Left ventricle myocardium inferior (tissue), 1 donor: ENCODE measurements at regions of chr17 and their contacts with region 1.

Region 1: DNA sequence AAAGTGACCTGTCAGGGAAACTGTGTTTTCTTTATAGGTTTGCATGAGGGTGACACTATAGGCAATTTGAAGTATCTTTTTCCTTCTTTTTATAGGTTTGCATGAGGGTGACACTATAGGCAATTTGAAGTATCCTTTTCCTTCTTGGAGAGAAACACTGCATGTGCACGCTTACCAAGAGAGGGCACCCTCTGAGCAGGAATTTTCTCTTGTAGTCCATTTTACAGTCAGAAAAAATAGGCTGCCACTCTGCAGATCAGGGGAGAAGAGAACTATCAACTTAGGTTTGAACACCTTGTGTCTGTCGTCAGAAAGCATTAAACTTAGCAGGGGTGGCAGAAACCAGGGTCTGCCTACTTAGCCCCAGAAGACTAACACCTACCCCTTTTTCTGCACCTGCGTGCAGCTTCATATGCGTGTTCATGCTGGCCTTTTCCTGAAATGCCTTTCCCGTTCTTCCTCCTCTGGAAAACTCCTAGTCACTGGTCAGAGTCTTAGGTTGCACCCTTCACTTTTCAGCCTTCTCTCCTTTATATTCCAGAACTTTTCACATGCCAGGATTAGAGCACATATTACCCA is 16.4 kb upstream of the SMIM36 start:
- DNase-seq: no peak
- H3K4me3 ChIP-seq: no peak overlapping the region
- H3K27ac ChIP-seq: no peak overlapping the region
- H3K4me1 ChIP-seq: no peaks in the 10 kb centered on the region
- H3K27me3 ChIP-seq: peaks cover 5% of the 10 kb centered on the region
- CTCF ChIP-seq: peak; percentile 67

Region 2: DNA sequence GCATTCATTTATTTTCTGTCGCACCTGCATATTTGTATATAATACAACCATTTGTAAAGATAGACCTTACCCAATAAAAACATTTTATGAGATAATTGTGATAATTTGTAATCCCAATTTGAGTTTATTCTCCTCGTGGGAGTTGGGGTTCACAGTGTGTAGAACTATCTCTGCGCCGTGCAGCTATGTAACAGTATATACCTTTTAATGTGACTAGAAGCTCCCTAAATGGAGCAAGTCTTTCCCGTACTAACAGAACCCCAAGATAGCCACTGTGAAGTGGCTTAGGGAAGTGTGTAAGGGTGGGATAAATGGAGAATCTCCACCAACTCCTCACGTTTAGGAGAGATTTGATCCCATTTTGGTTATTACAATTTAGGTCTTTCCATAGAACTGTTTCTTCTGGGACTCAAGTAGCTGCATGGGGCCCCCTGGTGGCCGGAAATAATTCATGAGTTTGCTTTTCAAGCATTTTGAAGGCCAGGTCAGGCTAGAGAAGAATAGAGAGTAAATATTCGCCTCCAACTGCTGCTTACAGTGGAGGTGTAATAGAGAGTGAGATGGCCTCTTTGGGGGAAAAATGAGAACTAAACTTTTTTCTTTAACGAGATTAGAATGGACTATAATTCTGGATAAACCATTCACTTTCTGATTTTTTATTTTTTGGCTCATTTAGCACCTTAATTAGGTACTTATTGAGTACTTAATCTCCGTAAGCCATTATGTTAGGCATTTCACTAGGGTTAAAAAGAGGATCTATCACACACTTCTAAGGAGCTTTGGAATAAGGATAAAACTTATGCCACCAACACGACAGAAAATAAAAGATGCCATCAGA is 190.5 kb after region 1 on chr17:
- intact Hi-C with region 1: loop called (anchors 2 kb)
- DNase-seq: peak; percentile 75
- H3K4me3 ChIP-seq: no peak overlapping the region
- H3K27ac ChIP-seq: no peak overlapping the region
- H3K4me1 ChIP-seq: peaks cover 26% of the 10 kb centered on the region
- H3K27me3 ChIP-seq: no peaks in the 10 kb centered on the region
- CTCF ChIP-seq: peak; percentile 84

Region 3: DNA sequence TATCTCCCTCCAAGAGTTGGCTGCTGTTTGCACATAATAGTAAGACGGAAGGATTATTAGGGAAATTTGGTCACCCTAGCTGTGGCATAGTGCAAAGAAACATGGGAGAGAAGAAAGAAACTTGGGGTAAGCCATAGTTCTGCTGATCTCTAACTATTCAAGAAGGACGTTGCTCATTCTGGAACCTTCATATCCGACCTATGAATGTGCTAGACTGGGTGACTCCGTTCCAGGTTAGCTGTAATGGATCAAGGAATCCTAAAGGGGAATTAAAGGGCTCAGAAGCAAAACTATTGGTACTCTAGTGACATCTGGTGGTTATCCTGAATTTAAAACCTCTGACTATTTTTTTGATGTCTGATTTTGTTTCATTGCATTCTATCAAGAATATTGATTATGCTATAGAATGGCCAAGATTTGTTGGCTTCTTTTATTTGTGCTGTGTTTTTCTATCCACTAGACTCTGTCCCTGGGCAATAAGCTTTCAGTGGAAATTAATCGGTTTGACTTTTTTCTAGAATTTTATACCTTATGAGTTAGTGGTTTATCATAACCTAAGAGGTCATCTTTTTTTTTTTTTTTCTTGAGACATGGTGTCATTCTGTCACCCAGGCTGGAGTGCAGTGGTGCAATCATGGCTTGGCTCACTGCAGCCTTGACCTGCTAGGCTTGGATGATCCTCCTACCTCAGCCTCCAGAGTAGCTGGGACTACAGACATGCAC is 242.7 kb after region 1 on chr17:
- intact Hi-C with region 1: loop called (anchors 2 kb)
- DNase-seq: no peak
- H3K4me3 ChIP-seq: no peak overlapping the region
- H3K27ac ChIP-seq: peak overlapping the region; percentile 9
- H3K4me1 ChIP-seq: peaks cover 22% of the 10 kb centered on the region
- H3K27me3 ChIP-seq: no peaks in the 10 kb centered on the region
- CTCF ChIP-seq: peak; percentile 75

Region 4: GRCh38 chr17:55825213-55825612 is 297.6 kb after region 1 on chr17:
- intact Hi-C with region 1: loop called (anchors 10 kb)
- DNase-seq: no peak
- H3K4me3 ChIP-seq: no peak overlapping the region
- H3K27ac ChIP-seq: no peak overlapping the region
- H3K4me1 ChIP-seq: no peaks in the 10 kb centered on the region
- H3K27me3 ChIP-seq: no peaks in the 10 kb centered on the region
- CTCF ChIP-seq: peak; percentile 65